AG04449 (cell line): ENCODE measurements at regions of chr5 and their contacts with region 1.

Region 1: DNA sequence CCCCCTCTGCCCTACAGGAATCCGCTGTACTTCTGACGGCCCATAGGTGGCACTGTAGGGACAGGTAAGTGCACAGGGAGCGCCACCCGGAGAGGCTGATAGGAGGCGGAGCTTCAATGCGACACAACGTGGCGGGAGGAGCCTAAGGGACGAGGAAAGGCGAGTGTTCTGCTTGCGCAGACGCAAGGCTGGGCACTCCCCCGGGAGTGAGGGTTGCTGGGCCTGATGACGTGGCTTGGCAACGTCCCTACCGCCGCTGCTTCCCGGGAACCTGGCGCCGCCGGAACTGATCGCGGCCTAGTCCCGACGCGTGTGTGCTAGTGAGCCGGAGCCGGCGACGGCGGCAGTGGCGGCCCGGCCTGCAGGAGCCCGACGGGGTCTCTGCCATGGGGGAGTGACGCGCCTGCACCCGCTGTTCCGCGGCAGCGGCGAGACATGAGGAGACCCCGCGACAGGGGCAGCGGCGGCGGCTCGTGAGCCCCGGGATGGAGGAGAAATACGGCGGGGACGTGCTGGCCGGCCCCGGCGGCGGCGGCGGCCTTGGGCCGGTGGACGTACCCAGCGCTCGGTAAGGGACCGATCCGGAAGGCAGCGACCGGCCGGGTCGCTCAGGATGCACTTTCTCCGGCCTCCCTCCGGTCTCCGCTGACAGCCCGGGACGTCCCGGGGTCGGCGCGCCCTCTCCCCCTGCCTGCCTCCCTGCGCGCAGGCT is at the start of gene SLC30A5:
- DNase-seq: peak; percentile 99
- H3K4me3 ChIP-seq: peak within 1 kb of the TSS; percentile 80
- CTCF ChIP-seq: peak; percentile 96

Region 2: DNA sequence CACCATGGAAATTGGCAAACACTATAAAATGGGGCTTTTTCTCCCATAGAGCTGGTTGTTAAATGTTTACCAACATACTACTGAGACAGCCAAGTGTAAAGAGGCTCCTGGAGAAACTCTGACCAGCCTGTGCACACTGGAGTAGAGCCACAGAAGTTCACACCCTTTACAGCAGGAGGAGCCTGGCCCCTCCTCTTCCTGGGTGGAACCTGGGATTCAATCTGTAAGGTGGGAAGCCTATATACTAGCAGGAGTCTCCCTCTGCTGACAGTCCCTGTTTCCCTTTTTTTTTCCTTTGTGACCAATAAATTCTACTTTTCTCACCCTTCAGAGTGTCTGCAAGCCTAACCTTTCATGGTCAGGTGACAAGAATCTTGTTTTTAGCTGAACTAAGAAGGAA is 10.5 kb before region 1 on chr5:
- CTCF ChIA-PET with region 1: interaction called, 49 read pairs
- POLR2A ChIA-PET with region 1: no interaction called
- DNase-seq: no peak
- H3K4me3 ChIP-seq: no peak overlapping the region
- CTCF ChIP-seq: no peak

Region 3: DNA sequence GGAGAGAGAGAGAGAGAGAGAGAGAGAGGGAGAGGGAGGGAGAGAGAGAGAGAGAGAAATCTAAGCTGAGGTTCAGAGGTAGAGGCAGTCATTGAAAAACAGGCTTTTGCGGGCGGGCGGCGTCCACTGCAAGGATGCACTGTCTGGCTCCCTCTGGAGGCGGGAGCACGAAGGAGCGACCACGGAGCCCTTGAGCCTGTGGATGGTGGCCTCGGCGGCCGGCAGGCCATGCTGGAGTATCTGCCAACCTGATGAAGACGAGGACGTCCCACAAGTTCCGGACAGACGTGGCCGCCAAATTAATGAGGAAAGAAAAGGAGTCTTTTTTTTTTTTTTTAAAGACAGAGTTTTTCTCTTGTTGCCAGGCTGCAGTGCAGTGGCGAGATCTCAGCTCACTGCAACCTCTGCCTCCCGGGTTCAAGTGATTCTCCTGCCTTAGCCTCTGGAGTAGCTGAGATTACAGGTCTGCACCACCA is 240.9 kb after region 1 on chr5:
- CTCF ChIA-PET with region 1: interaction called, 23 read pairs
- POLR2A ChIA-PET with region 1: no interaction called
- DNase-seq: peak; percentile 19
- H3K4me3 ChIP-seq: no peak overlapping the region
- CTCF ChIP-seq: peak; percentile 96